ENCODE measurements at regions of chr15 and their contacts with region 1.

Region 1: GRCh38 chr15:45919806-45920205 is 285.0 kb downstream of the SQOR start:
- DNase-seq: no peak

Region 2: GRCh38 chr15:45670091-45670490 is 249.7 kb before region 1 on chr15:
- intact Hi-C with region 1: no loop called
- DNase-seq: no peak

Region 3: GRCh38 chr15:45821390-45821789 is 98.4 kb before region 1 on chr15:
- intact Hi-C with region 1: no loop called
- DNase-seq: no peak

Region 4: DNA sequence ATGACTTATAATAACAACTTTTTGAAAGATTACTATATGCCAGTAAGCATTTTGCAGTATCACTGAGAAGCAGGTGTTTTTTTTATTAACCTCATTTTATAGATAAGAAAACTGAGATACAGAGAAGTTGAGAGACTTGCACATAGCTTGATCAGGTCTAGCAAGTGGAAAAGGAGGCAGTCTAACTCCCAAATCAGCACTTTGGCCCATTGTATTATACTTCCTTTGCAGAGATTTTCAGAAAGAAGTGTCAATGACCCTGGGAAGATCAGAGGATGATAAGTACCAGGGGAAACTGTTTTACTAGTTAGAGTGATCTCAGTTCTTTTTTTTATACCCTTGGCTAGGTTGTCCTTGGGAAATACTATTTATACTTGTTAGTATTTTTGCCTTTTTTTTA is 73.7 kb after region 1 on chr15:
- intact Hi-C with region 1: no loop called
- DNase-seq: no peak

Region 5: GRCh38 chr15:46080016-46080415 is 160.2 kb after region 1 on chr15:
- intact Hi-C with region 1: loop called (anchors 10 kb)
- DNase-seq: no peak

Region 6: DNA sequence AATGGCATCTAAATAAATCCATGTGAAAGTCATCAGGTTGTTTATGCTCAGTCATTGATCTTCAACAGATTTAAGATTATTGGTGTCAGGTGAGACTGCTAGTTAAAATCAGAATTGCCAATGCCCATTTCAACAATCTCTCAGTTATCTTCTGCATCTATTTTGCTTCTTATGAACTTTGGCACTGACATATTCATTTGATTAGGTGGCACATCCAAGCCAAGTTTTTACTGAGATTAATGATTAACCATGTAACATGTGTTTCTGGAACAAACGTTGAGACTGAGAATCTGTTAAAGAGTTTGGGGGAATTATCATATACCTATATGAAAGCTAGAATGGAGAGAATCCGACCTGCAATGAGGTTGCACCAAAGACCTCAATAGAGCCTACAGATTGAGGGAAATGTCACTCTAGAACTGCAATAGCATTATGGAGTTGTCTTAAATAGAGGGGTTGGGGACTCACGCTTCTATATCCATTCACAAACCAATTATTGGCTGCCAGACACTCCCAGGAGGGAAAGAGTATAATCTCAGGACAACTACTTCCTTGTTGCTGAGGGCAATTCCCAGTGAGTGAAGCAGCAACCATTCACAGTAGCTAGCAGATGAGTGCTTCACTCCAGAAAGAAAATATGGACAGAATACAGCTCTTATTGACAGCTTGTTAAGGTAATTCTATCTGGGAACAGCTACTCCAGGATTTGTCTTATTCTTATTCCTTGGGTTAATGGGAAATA is 606.3 kb after region 1 on chr15:
- intact Hi-C with region 1: no loop called
- DNase-seq: no peak

Measured in cardiac septum (tissue), 1 donor.